MCF 10A (cell line): ENCODE measurements at regions of chrX and their contacts with region 1.

Region 1: GRCh38 chrX:18425199-18426003 is at the start of gene CDKL5:
- DNase-seq: peak; percentile 95
- H3K4me3 Mint-ChIP-seq: peak within 1 kb of the TSS; percentile 82
- H3K27ac Mint-ChIP-seq: peak within 1 kb of the TSS; percentile 61
- H3K4me1 Mint-ChIP-seq: peaks cover 13% of the 10 kb centered on the region
- H3K27me3 Mint-ChIP-seq: no peaks in the 10 kb centered on the region
- CTCF ChIP-seq: no peak
- total RNA-seq, gene CDKL5: 8.2 and 8.3 TPM in 2 replicates

Region 2: GRCh38 chrX:18394477-18394876 is 30.9 kb before region 1 on chrX:
- CTCF ChIA-PET with region 1: no interaction called
- POLR2A ChIA-PET with region 1: no interaction called
- intact Hi-C with region 1: no loop called
- DNase-seq: no peak
- H3K4me3 Mint-ChIP-seq: no peak overlapping the region
- H3K27ac Mint-ChIP-seq: no peak overlapping the region
- H3K4me1 Mint-ChIP-seq: no peaks in the 10 kb centered on the region
- H3K27me3 Mint-ChIP-seq: no peaks in the 10 kb centered on the region
- CTCF ChIP-seq: no peak

Region 3: DNA sequence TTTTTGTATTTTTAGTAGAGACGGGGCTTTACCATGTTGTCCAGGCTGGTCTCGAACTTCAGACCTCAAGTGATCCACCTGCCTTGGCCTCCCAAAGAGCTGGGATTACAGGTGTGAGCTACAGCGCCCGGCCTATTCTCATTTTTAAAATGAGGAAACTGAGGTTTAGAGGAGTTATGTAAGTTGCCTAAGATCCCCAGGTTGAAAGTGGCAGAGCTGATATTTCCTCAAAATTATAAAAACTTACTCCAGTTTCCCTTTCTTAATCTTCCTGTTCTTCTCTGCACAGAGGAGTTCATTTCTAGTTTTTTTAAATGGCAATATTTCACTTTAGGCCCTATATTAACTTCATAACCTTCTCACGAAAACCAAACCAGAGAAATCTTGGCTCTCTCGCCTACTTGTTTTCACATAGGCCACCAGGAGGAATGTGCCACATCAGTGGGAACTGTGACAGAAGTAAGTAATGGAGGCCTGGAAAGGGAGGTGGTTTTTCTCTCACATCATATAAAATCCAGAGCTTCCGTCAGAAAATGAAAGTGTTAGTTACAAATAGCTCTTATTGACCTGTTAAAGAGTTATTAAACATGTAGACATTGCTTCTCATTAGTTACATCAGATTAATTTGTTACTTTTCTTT is 262.6 kb after region 1 on chrX:
- CTCF ChIA-PET with region 1: no interaction called
- POLR2A ChIA-PET with region 1: no interaction called
- intact Hi-C with region 1: loop called (anchors 10 kb)
- DNase-seq: no peak
- H3K4me3 Mint-ChIP-seq: no peak overlapping the region
- H3K27ac Mint-ChIP-seq: no peak overlapping the region
- H3K4me1 Mint-ChIP-seq: no peaks in the 10 kb centered on the region
- H3K27me3 Mint-ChIP-seq: no peaks in the 10 kb centered on the region
- CTCF ChIP-seq: no peak

Region 4: DNA sequence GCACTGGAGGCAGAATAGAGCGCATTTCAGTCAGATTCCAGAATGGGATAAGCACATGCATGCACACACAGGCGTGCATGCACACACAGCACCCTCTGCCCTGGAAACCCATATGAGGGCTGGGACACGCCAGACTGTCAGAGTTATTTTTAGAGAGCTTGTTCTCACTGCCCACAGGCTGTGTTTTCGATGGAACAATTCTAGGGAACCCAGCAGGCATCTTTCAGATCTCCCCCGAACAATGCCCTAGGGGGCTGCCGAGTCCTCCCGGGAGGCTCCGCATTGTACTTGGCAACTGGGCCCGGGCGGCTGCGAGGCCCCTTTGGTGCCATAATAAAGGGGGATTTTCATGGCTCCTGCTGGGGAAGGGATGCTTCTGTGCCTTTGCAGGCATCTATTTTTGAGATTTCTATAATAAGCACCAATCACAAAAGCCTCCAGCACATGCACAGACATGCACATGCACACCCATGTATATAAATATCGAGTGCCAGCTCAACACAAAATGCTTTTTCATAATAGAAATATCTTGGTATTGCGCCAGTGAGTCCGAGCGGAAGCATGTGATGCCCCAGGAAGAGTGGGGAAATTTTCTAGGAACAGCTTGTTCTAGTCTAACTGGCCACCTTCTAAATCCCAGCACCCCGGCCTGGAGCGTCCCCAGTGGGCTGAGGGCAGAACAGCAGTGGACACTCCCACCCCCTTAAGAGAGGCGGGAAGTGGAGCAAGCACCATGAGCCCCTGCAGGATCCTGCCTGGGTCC is 470.0 kb after region 1 on chrX:
- CTCF ChIA-PET with region 1: interaction called, 3 read pairs
- POLR2A ChIA-PET with region 1: interaction called, 7 read pairs
- intact Hi-C with region 1: loop called (anchors 1 kb)
- DNase-seq: peak; percentile 87
- H3K4me3 Mint-ChIP-seq: no peak overlapping the region
- H3K27ac Mint-ChIP-seq: peak overlapping the region; percentile 85
- H3K4me1 Mint-ChIP-seq: no peaks in the 10 kb centered on the region
- H3K27me3 Mint-ChIP-seq: no peaks in the 10 kb centered on the region
- CTCF ChIP-seq: peak; percentile 37